ENCODE measurements at regions of chr11 and their contacts with region 1.

Region 1: DNA sequence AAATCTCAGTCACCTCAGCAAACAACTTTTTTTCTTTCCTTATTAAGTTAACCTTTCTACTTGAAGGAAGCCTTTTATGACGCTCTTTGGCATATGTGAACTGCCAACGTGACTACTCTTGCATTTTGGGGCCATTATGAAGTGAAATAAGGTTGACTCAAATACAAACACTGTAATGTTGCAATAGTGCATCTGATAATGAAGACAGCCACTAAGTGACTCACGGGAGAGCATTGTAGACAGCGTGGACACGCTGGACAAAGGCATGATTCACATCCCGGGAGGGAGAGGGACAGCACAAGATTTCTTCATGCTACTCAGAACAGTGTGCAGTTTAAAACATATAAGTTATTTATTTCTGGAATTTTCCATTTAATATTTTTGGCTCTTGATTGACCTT is 560.8 kb downstream of the ETS1 start:
- DNase-seq: no peak
- ATAC-seq: no peak
- H3K4me3 ChIP-seq: no peak overlapping the region
- H3K4me3 Mint-ChIP-seq: no peak overlapping the region
- H3K27ac ChIP-seq: no peak overlapping the region
- H3K27ac Mint-ChIP-seq: no peak overlapping the region
- H3K4me1 ChIP-seq: peaks cover under 1% of the 10 kb centered on the region
- H3K4me1 Mint-ChIP-seq: no peaks in the 10 kb centered on the region
- H3K27me3 ChIP-seq: no peaks in the 10 kb centered on the region
- H3K27me3 Mint-ChIP-seq: peaks cover 19 to 25% of the 10 kb centered on the region in 2 donors
- CTCF ChIP-seq: no peak

Region 2: DNA sequence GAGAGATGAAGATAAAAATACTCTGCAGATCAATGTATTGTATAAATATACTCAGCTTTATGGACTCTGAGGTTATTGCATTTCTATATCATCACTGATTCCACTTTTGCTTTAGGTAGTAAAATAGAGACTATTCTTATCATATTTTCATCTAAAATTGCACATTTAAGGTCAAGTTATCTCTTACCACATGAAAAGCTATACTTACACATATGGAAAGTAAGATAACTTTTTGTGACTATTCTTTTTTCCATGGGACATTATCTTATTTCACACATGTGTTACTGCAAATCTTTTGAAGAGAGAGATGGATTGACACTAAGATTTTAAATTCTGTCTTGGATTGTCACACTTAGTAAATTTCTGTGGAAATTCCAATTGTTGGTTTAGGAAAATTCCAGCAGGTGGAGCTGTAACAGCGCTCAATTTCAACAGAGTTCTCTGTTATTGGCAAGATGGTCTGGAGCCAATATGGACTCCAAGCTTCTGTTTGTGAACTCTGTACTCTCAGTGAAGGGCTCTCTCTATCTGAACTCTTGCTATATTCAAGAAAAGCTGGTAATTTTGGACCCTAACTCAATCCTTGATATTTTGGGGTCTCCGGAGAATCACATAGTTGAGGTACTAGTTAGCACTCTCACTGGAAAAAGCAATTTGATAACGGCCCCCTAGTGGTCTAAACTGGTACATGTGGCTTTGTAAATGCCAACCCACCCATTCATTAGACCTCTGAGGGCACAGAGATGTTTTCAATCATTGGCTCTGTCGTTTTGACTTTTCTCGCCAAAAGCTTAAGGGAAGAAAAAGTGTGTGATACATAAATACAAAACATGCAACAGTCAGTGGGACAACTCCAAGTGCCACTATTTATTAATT is 131.1 kb after region 1 on chr11:
- intact Hi-C with region 1: loop called (anchors 1 kb)
- DNase-seq: peak; percentile 38 to 86
- ATAC-seq: peak; percentile 86 to 94 (median 92)
- H3K4me3 ChIP-seq: peak overlapping the region; percentile 14
- H3K4me3 Mint-ChIP-seq: peak overlapping the region; percentile 70
- H3K27ac ChIP-seq: no peak overlapping the region
- H3K27ac Mint-ChIP-seq: peak overlapping the region in 1 of 2 donors; percentile 78
- H3K4me1 ChIP-seq: no peaks in the 10 kb centered on the region
- H3K4me1 Mint-ChIP-seq: peaks cover 9 to 12% of the 10 kb centered on the region in 2 donors
- H3K27me3 ChIP-seq: no peaks in the 10 kb centered on the region
- H3K27me3 Mint-ChIP-seq: no peaks in the 10 kb centered on the region
- CTCF ChIP-seq: peak; percentile 97

Region 3: DNA sequence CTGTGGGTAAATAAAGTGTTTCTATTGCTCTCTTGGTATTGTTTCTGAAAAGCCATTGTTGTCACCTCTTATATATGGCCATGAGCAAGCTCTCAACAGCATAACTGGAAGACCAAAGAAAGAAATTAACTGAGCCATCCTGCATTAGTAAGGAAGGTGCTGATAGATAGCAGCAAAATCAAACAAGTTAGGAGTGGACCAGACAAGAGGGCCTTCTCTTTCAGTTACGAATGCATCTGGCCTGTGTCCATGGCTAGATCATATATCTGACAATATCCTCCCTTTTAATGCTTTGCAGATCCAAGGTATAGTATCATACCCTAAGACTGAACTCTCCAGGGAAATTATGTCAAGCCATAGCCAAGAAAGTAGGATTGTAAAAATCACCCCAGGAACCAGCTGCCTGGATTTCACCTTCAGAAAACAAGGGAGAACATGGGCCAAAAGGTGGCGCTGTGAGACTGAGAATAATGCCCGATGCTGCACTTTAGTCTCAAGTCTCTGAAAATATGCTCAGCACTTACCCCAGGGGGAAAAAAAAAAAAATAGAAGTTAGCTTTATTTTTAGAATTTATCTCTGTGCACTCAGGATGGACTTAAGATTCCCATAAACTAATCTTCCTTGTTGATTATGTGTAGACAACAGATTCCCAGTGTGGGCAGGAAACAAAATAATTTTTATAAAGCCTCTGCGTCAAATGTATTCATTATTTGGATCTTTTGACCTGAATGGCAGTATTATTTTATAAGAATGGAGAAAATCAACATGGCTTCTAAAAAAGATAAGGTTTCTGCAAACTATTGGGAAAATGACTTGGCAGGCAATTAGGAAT is 145.7 kb after region 1 on chr11:
- intact Hi-C with region 1: loop called (anchors 1 kb)
- DNase-seq: peak; percentile 81 to 93
- ATAC-seq: peak; percentile 85 to 94 (median 88)
- H3K4me3 ChIP-seq: no peak overlapping the region
- H3K4me3 Mint-ChIP-seq: no peak overlapping the region
- H3K27ac ChIP-seq: no peak overlapping the region
- H3K27ac Mint-ChIP-seq: no peak overlapping the region
- H3K4me1 ChIP-seq: no peaks in the 10 kb centered on the region
- H3K4me1 Mint-ChIP-seq: peaks cover 8 to 11% of the 10 kb centered on the region in 2 donors
- H3K27me3 ChIP-seq: no peaks in the 10 kb centered on the region
- H3K27me3 Mint-ChIP-seq: peaks cover 0 to 3% of the 10 kb centered on the region in 2 donors
- CTCF ChIP-seq: peak; percentile 97

Region 4: DNA sequence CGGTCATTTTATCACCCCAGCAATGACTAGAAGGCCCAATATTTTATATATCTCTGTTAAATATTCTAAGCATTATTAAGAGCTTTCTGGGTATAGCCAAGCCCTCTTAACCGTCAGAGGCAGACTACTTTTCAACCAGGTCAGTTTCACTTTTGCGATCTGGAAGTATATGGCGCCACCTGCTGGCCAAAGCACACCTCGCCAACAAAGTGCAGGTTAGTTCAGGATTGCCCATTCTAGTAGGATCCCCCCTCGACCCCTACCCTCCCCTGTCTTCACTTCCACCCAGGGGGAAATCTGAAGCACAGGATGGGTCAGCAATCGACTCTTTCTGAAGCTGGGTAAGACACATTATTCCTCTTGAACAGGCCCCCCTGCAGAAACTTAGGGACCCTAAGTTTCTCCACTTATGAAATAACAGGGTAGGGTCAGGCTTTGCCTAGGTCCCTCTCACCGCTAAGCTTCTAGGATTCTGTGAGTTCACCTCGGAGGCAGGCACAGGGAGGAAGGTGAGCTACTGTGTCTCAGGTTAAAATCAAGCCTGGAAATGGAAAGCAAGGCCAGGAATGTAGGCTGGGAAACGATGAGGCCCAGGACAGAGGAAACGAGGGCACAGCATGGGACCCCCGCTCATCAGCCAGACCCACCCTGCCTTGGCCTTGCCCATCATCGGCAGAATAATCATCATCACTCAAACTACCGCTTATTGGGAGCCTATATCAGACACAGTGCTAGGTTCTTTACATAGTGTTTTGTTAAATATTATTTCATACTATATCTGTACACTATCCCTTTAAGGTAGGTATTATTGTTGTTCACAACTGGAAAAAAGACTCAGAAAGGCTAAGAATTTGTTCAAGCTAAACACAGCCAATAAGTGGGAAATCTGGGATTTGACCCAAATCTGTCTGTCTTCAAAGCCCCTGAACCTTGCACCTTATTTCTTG is 804.9 kb after region 1 on chr11:
- intact Hi-C with region 1: loop called (anchors 1 kb)
- DNase-seq: peak; percentile 82 to 94
- ATAC-seq: peak; percentile 86 to 90 (median 88)
- H3K4me3 ChIP-seq: peak overlapping the region; percentile 13
- H3K4me3 Mint-ChIP-seq: peak overlapping the region; percentile 84
- H3K27ac ChIP-seq: peak overlapping the region; percentile 70
- H3K27ac Mint-ChIP-seq: peak overlapping the region; percentile 87 to 88
- H3K4me1 ChIP-seq: peaks cover 16% of the 10 kb centered on the region
- H3K4me1 Mint-ChIP-seq: peaks cover 25 to 36% of the 10 kb centered on the region in 2 donors
- H3K27me3 ChIP-seq: no peaks in the 10 kb centered on the region
- H3K27me3 Mint-ChIP-seq: no peaks in the 10 kb centered on the region
- CTCF ChIP-seq: peak; percentile 95

Region 5: GRCh38 chr11:128848815-128849455 is 822.3 kb after region 1 on chr11:
- intact Hi-C with region 1: loop called (anchors 1 kb)
- DNase-seq: peak; percentile 69 to 79
- ATAC-seq: peak; percentile 79 to 89 (median 87)
- H3K4me3 ChIP-seq: no peak overlapping the region
- H3K4me3 Mint-ChIP-seq: no peak overlapping the region
- H3K27ac ChIP-seq: no peak overlapping the region
- H3K27ac Mint-ChIP-seq: peak overlapping the region; percentile 1 to 12
- H3K4me1 ChIP-seq: peaks cover 12% of the 10 kb centered on the region
- H3K4me1 Mint-ChIP-seq: peaks cover 17 to 19% of the 10 kb centered on the region in 2 donors
- H3K27me3 ChIP-seq: no peaks in the 10 kb centered on the region
- H3K27me3 Mint-ChIP-seq: no peaks in the 10 kb centered on the region
- CTCF ChIP-seq: peak; percentile 92

Region 6: GRCh38 chr11:128956401-128957201 is 930.0 kb after region 1 on chr11:
- intact Hi-C with region 1: loop called (anchors 2 kb)
- DNase-seq: peak in 1 of 2 donors; percentile 70
- ATAC-seq: peak in 2 of 3 donors; percentile 57 to 69
- H3K4me3 ChIP-seq: no peak overlapping the region
- H3K4me3 Mint-ChIP-seq: no peak overlapping the region
- H3K27ac ChIP-seq: no peak overlapping the region
- H3K27ac Mint-ChIP-seq: no peak overlapping the region
- H3K4me1 ChIP-seq: no peaks in the 10 kb centered on the region
- H3K4me1 Mint-ChIP-seq: peaks cover 0 to 6% of the 10 kb centered on the region in 2 donors
- H3K27me3 ChIP-seq: no peaks in the 10 kb centered on the region
- H3K27me3 Mint-ChIP-seq: peaks cover 26 to 45% of the 10 kb centered on the region in 2 donors
- CTCF ChIP-seq: peak; percentile 77

Measured in natural killer cell (primary cell).